OCI-LY7 (cell line): ENCODE measurements at regions of chr5 and their contacts with region 1.

Region 1: DNA sequence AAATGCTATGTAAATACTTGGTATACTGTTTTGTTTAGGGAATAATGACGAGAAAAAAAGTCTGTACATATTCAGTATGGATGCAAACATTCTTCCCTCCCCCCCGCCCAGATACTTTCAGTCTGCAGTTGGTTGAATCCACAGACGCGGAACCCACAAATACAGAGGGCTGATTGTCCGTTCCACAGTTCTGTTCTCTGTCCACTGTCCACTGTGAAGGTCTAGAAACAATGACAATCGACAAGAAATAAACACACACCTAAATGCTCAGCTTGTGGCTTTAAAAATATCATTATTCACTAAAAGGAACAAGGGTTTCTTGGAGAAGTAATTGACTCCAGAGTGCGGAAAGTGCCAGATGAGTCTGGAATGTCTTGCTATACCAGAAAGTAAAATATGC is 109.1 kb downstream of the TMEM161B start:
- DNase-seq: no peak
- H3K4me3 ChIP-seq: no peak overlapping the region
- H3K27ac ChIP-seq: no peak overlapping the region
- H3K4me1 ChIP-seq: no peaks in the 10 kb centered on the region
- CTCF ChIP-seq: no peak

Region 2: DNA sequence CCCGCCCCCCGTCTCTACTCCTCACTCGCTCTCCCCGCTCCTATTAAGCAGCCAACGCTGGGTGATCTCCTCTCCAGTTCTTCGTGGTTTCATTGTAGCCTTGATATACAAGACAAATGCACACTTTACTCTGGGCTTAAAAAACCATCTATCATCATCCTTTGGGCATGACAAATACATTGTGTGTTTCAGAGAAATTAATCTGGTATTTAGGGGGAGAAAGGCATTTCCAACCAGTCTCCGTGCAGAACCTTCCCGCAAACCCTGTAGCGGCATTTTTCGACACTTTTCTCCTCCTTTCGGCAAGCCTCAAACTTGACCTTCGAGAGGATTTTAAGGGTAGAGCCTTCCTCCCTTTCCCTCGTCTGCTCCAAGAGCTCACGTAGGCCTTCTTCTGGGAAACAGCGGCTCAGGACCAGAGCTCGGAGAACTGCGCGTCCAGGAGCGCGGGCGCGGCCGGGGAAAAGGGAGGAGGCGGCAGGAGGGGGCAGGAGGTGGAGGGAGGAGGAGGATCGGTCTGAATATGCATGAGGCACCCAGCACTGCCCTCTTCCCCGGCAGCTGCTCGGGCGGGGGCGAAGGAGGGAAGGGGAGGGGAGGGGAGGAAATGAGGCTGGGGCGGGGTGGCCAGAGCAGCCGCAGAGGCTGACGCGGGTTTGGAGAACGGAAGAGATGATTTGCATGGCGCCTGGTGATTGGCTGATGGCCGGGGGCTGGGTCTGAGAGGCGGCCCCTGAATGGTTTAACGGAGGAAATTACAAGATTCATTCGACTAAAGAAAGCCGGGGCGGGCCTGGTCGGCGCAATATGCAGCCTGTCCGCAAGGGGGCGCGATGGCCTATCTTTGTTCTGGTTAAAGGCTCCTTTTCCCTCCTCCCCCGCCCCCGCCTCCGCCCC is 18.5 kb before region 1 on chr5:
- CTCF ChIA-PET with region 1: no interaction called
- POLR2A ChIA-PET with region 1: no interaction called
- intact Hi-C with region 1: no loop called
- DNase-seq: peak; percentile 54
- H3K4me3 ChIP-seq: no peak overlapping the region
- H3K27ac ChIP-seq: no peak overlapping the region
- H3K4me1 ChIP-seq: peaks cover 5% of the 10 kb centered on the region
- CTCF ChIP-seq: peak; percentile 53

Region 3: GRCh38 chr5:88214655-88215054 is 55.1 kb after region 1 on chr5:
- CTCF ChIA-PET with region 1: no interaction called
- POLR2A ChIA-PET with region 1: no interaction called
- intact Hi-C with region 1: no loop called
- DNase-seq: no peak
- H3K4me3 ChIP-seq: no peak overlapping the region
- H3K27ac ChIP-seq: no peak overlapping the region
- H3K4me1 ChIP-seq: no peaks in the 10 kb centered on the region
- CTCF ChIP-seq: no peak

Region 4: DNA sequence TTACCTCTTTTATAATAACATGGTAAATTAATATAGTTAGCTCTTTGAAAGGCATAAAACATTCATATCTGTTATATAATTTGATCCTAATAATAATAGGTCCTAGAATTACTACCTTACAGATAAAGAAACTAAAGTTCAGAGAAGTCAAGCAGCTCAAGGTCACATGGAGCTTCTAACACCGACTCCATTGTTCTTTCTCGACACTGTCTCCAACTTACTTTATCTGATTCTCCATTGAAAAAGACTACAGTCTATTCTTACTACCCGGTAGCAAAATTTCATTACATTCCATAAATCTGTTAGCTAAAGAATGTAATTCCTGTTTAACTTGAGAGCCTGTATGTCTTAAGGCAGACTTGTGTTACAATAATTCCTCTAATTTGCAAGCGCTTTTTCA is 205.4 kb after region 1 on chr5:
- CTCF ChIA-PET with region 1: no interaction called
- POLR2A ChIA-PET with region 1: no interaction called
- intact Hi-C with region 1: loop called (anchors 10 kb)
- DNase-seq: no peak
- H3K4me3 ChIP-seq: no peak overlapping the region
- H3K27ac ChIP-seq: no peak overlapping the region
- H3K4me1 ChIP-seq: no peaks in the 10 kb centered on the region
- CTCF ChIP-seq: no peak

Region 5: DNA sequence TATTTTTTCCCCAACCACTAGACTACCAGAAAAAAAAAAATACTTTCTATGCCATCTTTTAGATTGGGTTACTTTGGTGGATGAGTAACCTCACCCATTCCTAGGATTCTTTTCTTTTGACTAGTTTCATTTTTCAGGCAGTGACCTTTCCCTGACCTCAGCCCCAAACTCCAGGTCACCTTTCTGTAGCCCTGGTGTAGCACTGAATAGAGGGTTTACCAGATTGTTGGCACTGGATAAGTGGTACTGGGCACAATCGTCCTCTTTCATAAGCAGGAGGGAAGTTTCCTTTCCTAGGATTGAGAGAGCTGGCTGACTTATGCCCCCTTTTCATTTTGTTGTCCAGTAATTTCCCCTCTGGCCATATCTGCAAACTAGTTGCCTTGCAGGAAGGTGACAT is 278.4 kb after region 1 on chr5:
- CTCF ChIA-PET with region 1: no interaction called
- POLR2A ChIA-PET with region 1: no interaction called
- intact Hi-C with region 1: no loop called
- DNase-seq: no peak
- H3K4me3 ChIP-seq: no peak overlapping the region
- H3K27ac ChIP-seq: no peak overlapping the region
- H3K4me1 ChIP-seq: no peaks in the 10 kb centered on the region
- CTCF ChIP-seq: no peak